GM18951 (cell line): ENCODE measurements at regions of chr1 and their contacts with region 1.

Region 1: GRCh38 chr1:88655685-88656299 is 28.3 kb upstream of the PKN2 start:
- POLR2A ChIP-seq: no peak

Region 2: DNA sequence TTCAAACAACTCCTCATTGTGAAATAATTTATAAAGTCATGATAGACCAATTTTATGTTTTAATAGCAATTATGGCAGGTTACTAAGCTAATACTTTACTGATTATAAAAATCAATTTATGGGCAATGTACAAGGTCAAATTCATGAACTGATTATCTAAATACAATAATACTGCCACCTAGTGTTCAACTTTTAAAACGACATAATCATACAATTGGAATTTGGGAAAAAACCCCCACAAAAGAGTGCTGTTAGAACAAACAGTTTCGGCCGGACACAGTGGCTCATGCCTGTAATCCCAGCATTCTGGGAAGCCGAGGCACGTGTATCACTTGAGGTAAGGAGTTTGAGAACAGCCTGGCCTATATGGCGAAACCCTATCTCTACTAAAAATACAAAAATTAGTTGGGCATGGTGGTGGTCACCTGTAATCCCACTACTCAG is 221.6 kb after region 1 on chr1:
- in situ Hi-C with region 1: loop called (anchors 10 kb)
- POLR2A ChIP-seq: no peak